Pancreas (tissue), 10 donors: ENCODE measurements at regions of chr1 and their contacts with region 1.

Region 1: DNA sequence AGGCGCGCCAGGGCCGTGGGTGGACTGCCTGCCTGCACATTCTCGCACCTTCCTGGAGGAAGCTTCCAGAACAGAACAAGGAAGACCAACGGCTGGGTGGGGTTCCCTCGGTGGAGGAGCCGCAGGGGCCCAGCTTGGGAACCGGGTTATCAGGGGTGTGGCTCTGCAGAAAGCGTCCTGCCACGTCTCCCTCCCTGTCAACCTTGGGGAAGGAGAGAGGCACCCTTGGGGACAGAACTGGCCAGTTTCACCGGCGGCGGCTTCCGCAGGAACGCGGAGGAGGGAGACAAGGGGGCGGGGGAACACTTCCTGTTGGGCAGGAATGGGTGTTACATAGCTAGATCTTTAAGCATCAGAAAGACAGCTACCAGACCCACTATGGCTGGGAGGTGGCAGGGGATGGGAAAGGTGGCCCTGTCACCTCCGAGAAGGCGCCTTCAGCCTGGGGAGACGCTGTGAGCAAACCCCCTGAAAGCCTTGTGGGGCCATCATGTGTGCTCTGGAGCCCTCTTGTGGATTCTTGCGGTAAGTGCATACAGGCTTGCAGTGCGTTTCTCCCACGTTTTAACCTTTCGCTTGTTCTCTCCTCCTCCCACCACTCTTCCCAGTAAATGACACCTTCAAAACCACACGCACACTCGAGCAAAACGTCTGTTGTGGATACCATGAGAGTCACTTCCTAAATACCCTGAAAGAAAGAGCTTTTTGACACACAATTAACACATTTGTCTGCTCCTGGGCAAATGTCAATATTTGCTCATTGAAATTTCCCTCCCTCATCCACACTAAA is 3.8 kb upstream of the PLEKHA6 start:
- DNase-seq: peak; percentile 61 to 83 (median 70)
- ATAC-seq: peak; percentile 79 to 95 (median 90)
- H3K4me3 ChIP-seq: peak overlapping the region; percentile 3 to 43 (median 24)
- H3K27ac ChIP-seq: peak overlapping the region in 3 of 4 donors; percentile 13 to 58 (median 55)
- H3K4me1 ChIP-seq: peaks cover 0 to 7% (median 4%) of the 10 kb centered on the region in 3 donors
- H3K27me3 ChIP-seq: no peaks in the 10 kb centered on the region
- CTCF ChIP-seq: peak; percentile 90 to 95 (median 92)

Region 2: DNA sequence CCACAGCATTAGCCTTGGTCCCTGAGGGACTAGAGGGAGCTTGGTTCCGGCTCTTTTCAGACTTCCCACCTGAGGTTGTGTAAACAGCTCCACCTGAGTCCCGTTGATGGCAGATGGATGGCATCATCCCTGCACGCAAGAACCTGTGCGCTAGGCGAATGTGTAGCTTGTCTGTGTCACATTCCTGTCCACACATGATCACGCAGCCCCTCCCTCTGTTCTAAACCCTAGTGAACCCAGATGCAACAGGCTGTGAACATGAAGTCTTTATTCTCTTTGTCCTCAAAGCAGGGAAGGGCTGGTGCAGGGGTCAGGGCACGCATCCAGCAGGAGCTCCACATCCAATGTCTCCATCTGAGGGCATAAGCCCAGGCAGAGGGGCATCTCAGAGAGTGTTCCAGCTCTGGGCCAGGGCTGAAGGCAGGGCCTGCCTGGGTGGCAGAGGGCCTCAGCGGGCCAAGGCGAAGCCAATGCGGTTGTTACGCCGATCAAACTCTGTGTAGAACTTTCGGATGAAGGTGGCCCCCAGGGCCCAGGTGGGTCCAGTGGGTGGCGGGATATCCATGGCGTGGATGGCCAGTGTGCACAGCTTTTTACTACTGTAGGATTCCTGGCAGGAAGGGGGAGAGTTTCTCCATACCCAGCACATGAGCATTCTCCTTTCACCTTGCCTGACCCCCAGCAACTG is 208.8 kb before region 1 on chr1:
- intact Hi-C with region 1: loop called in 2 of 3 experiments (anchors 5 kb)
- DNase-seq: no peak
- ATAC-seq: no peak
- H3K4me3 ChIP-seq: no peak overlapping the region
- H3K27ac ChIP-seq: no peak overlapping the region
- H3K4me1 ChIP-seq: no peaks in the 10 kb centered on the region
- H3K27me3 ChIP-seq: no peaks in the 10 kb centered on the region
- CTCF ChIP-seq: no peak

Region 3: GRCh38 chr1:204257954-204258752 is 105.4 kb before region 1 on chr1:
- intact Hi-C with region 1: loop called (anchors 5 to 10 kb)
- DNase-seq: peak; percentile 46 to 84 (median 64)
- ATAC-seq: peak; percentile 79 to 90 (median 84)
- H3K4me3 ChIP-seq: no peak overlapping the region
- H3K27ac ChIP-seq: no peak overlapping the region
- H3K4me1 ChIP-seq: peaks cover 0 to under 1% (median 0%) of the 10 kb centered on the region in 3 donors
- H3K27me3 ChIP-seq: no peaks in the 10 kb centered on the region
- CTCF ChIP-seq: peak; percentile 40 to 70 (median 58)

Region 4: DNA sequence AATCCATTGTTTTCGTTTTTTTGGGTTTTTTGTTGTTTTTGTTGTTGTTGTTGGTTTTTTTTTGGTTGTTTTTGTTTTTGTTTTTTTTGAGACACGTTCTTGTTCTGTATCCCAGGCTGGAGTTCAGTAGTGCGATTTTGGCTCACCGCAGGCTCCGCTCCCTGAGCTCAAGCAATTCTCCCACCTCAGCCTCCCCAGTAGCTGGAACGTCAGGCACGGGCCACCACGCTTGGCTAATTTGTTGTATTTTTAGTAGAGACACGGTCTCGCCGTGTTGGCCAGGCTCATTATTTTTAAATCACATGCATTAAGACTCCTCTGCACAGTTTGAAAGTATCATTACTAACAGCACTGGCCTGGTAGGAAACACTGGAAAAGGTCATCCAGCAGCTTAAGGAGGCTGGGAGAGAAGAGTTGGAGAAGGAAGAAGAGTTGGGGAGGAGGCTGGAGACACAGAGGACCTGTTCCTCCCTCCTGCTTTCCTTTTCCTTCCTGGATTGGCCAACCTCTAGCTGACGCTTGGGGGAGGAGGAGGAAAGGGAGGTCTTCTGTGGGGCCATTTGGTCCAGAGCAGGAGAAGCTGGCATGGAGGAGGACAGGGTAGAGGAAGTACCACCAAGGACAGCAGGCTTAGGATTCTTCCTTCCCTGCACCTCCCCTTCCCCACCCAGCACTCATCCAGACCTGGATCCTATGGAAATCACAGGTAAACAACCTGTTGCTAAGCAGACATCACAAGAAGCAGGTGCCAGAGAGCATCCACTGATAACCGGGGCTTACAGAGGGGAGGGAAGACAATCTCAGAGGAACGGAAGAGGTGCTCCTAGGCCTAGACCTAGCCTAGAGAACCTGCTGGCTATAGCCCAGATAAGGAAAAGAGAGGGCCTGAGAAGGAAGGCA is 77.9 kb before region 1 on chr1:
- intact Hi-C with region 1: no loop called
- DNase-seq: no peak
- ATAC-seq: peak in 1 of 4 donors; percentile 7
- H3K4me3 ChIP-seq: peak overlapping the region in 2 of 4 donors; percentile 29 to 41
- H3K27ac ChIP-seq: peak overlapping the region; percentile 20 to 91 (median 76)
- H3K4me1 ChIP-seq: peaks cover 26 to 42% (median 40%) of the 10 kb centered on the region in 3 donors
- H3K27me3 ChIP-seq: no peaks in the 10 kb centered on the region
- CTCF ChIP-seq: no peak

Region 5: GRCh38 chr1:204296431-204296988 is 67.0 kb before region 1 on chr1:
- intact Hi-C with region 1: no loop called
- DNase-seq: no peak
- ATAC-seq: peak in 3 of 4 donors; percentile 24 to 66 (median 36)
- H3K4me3 ChIP-seq: no peak overlapping the region
- H3K27ac ChIP-seq: no peak overlapping the region
- H3K4me1 ChIP-seq: peaks cover 0 to 3% (median 0%) of the 10 kb centered on the region in 3 donors
- H3K27me3 ChIP-seq: no peaks in the 10 kb centered on the region
- CTCF ChIP-seq: no peak